WTC11 (cell line): ENCODE measurements at regions of chr16 and their contacts with region 1.

Region 1: GRCh38 chr16:4358831-4359561 is 7.9 kb upstream of the PAM16 start:
- DNase-seq: peak; percentile 94
- ATAC-seq: peak; percentile 90
- H3K4me3 Mint-ChIP-seq: no peak overlapping the region
- H3K27ac Mint-ChIP-seq: no peak overlapping the region
- H3K4me1 Mint-ChIP-seq: no peaks in the 10 kb centered on the region
- H3K27me3 Mint-ChIP-seq: no peaks in the 10 kb centered on the region
- CTCF ChIP-seq: peak; percentile 100

Region 2: DNA sequence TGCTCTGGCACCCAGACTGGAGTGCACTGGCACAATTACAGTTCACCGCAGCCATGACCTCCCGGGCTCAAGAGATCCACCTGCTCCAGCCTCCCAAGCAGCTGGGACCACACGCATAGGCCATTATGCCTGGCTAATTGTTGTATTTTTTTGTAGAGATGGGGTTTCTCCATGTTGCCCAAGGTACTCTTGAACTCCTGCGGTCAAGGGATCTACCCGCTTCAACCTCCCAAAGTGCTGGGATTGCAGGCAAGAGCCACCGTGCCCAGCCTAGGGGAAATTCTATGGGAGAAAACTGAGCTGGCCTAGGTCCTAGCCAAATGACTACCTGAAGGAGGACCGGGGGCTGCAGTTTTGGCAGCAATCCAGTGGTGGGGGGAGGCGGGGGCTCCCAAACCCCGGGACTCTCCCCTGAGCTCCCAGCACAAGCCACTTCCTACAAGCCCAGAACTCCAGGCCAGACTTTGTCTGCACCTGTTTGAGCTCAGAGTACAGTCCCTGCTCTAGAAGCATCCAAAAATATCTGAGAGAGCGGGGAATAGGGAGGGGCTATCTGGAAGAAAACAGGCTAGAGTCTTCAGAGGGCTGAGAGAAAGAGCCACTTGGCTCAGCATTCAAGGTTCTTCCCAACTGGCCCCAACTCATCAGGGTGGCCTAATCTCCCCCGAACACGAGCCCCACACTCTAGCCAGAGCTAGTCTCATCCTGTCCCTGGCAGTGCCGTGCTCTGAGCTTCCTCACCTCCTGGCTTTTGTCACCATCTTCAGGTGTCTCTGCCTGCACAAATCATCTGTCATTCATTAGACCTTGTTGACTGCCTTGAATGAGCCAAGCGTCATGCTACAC is 126.2 kb before region 1 on chr16:
- CTCF ChIA-PET with region 1: no interaction called
- POLR2A ChIA-PET with region 1: no interaction called
- DNase-seq: no peak
- ATAC-seq: no peak; the same call in 1 of the 2 replicates
- H3K4me3 Mint-ChIP-seq: no peak overlapping the region
- H3K27ac Mint-ChIP-seq: no peak overlapping the region
- H3K4me1 Mint-ChIP-seq: no peaks in the 10 kb centered on the region
- H3K27me3 Mint-ChIP-seq: no peaks in the 10 kb centered on the region
- CTCF ChIP-seq: no peak

Region 3: DNA sequence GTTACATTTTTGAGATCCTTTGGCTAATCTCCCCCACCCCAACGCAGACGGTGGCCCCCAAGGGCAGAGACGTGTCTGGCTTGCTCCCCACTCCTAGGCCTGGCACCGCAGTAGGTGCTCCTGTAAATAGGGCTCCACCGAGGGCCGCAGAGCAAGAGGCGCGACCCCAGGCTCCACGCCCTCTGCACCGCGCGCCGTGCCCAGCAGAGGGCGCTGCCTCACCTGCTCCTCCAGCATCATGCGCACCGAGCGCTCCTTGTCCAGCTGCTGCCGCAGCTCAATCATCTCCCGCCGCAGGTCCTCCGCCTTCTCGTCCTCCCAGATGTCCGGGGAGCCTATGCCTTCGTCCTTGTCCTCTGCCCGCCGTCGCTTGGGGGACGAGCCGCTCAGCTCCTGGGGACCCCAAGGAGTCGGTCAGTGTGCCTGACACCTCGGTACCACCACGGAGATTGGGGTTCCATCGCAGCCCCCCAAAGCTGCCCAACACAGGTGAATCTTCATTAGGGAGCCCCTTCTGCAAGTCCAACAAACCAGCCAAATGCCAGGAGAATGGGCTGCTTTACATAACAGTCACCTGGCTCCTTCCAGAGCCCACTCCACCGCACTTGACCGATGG is 97.3 kb before region 1 on chr16:
- CTCF ChIA-PET with region 1: interaction called, 10 read pairs
- POLR2A ChIA-PET with region 1: no interaction called
- DNase-seq: peak; percentile 90
- ATAC-seq: peak; percentile 64
- H3K4me3 Mint-ChIP-seq: no peak overlapping the region
- H3K27ac Mint-ChIP-seq: peak overlapping the region; percentile 93
- H3K4me1 Mint-ChIP-seq: peaks cover 29% of the 10 kb centered on the region
- H3K27me3 Mint-ChIP-seq: no peaks in the 10 kb centered on the region
- CTCF ChIP-seq: peak; percentile 99

Region 4: DNA sequence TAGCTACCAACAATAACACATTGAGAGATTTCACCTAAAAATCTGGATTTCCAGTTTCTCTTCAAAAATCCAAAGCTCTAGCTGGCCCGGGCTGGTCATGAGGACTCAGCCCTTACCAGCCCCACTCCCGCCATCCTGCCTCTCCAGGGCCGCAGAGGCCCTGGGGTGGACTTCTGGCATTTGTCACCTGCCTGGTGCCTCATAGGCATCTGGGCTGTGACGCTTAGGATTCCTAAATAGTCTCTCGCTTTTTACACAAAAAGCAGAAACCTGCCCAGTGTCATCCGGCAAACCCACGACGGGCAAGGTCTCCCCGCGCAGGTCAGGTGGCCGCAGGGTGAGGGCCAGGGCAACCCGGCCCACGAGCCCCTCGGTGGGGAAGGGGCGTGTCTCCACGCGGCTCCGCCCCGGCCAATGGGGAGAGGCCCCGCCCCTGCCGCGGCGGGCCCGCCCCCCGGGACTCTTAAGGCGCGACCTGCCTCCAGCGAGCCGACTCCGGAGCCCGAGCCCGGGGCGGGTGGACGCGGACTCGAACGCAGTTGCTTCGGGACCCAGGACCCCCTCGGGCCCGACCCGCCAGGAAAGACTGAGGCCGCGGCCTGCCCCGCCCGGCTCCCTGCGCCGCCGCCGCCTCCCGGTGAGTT is 12.5 kb after region 1 on chr16 and contains the start of gene VASN:
- CTCF ChIA-PET with region 1: interaction called, 44 read pairs
- POLR2A ChIA-PET with region 1: interaction called, 3 read pairs
- DNase-seq: peak; percentile 83
- ATAC-seq: peak; percentile 77
- H3K4me3 Mint-ChIP-seq: peak within 1 kb of the TSS; percentile 83
- H3K27ac Mint-ChIP-seq: no peak within 1 kb of the TSS
- H3K4me1 Mint-ChIP-seq: peaks cover 25% of the 10 kb centered on the region
- H3K27me3 Mint-ChIP-seq: no peaks in the 10 kb centered on the region
- CTCF ChIP-seq: no peak
- total RNA-seq, gene VASN: 8.0 to 9.1 TPM (median 8.3 TPM) in 3 replicates

Region 5: GRCh38 chr16:4377573-4378143 is 18.7 kb after region 1 on chr16:
- CTCF ChIA-PET with region 1: interaction called, 80 read pairs
- POLR2A ChIA-PET with region 1: interaction called, 5 read pairs
- DNase-seq: no peak
- ATAC-seq: peak; percentile 46
- H3K4me3 Mint-ChIP-seq: no peak overlapping the region
- H3K27ac Mint-ChIP-seq: peak overlapping the region; percentile 64
- H3K4me1 Mint-ChIP-seq: peaks cover 47% of the 10 kb centered on the region
- H3K27me3 Mint-ChIP-seq: no peaks in the 10 kb centered on the region
- CTCF ChIP-seq: no peak

Region 6: DNA sequence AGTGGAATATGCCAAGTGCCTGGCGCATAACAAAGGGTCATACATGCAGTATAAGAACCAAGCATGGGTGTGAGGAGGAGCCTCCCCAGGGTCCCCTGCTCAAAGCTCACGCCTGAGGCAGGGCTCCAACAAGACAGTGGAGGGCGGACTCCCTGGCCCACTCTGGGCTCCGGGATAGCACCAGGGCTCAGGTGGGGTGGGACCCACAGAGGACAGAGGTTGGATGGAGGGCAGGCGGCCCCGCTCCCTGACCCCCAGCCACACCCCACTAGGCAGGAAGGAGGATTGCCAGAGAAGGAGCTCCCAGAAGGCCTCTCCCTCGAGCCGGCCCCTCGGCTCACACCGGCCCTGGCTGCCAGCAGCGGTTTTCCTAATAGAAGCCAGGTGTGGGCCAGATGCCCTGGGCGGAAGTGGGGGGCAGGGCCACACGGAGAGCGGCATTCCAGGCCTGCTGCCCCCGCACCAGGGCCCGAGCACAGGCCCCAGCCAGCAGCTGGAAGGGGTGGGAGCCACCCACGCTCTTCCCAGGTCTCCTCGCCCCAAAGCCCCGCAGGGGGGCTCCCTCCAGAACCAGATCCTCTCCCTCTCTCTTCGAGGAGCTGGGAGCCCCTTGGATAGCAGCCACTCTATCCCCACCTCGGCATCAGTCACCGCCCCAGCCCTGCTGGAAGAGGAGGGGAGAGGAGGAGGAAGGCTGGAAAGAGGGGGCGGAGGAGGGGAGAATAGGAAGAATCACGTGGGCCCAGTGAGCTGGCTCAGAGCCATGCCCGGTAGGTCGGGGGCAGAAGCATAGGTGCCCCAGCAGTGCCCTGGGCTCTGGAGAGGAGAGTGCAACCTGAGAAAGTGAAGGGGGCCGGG is 33.6 kb after region 1 on chr16:
- CTCF ChIA-PET with region 1: interaction called, 106 read pairs
- POLR2A ChIA-PET with region 1: interaction called, 3 read pairs
- DNase-seq: peak; percentile 81
- ATAC-seq: peak; percentile 76
- H3K4me3 Mint-ChIP-seq: peak overlapping the region; percentile 20; the same call in 1 of the 2 replicates
- H3K27ac Mint-ChIP-seq: peak overlapping the region; percentile 92
- H3K4me1 Mint-ChIP-seq: peaks cover 48% of the 10 kb centered on the region
- H3K27me3 Mint-ChIP-seq: no peaks in the 10 kb centered on the region
- CTCF ChIP-seq: no peak

Region 7: DNA sequence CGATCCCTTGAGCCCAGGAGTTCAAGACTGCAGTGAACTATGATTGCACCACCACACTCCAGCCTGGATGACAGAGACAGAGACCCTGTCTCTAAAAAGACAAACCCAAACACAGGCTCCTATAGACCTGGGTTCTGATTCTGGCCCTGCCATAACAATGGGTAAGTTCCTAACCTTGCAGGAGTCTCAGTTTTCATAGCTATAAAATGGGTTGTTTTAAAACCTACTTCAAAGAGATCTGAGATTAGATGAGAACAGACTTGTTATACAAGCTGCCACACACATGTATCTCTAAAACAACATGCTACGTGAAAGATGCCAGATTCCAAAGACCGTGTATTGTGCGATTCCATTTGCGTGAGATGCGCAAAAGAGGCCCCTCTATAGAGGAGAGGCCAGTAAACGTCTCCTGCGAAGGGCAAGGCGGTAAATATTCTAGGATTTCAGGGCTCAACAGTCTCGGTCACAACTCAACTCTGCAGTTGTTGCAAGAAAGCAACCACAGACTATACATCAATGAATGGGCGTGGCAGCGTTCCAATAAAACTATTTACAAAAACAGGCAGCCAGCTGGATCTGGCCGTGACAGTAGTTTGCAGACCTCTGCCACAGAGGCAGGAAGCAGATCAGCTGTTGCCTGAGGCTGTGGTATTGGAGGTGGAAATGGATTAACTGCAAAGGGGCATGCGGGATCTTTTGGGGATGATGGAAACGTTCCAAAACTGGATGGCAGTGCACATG is 51.5 kb after region 1 on chr16:
- CTCF ChIA-PET with region 1: interaction called, 322 read pairs
- POLR2A ChIA-PET with region 1: no interaction called
- DNase-seq: no peak
- ATAC-seq: no peak
- H3K4me3 Mint-ChIP-seq: no peak overlapping the region
- H3K27ac Mint-ChIP-seq: no peak overlapping the region
- H3K4me1 Mint-ChIP-seq: peaks cover 4% of the 10 kb centered on the region
- H3K27me3 Mint-ChIP-seq: no peaks in the 10 kb centered on the region
- CTCF ChIP-seq: no peak

Region 8: DNA sequence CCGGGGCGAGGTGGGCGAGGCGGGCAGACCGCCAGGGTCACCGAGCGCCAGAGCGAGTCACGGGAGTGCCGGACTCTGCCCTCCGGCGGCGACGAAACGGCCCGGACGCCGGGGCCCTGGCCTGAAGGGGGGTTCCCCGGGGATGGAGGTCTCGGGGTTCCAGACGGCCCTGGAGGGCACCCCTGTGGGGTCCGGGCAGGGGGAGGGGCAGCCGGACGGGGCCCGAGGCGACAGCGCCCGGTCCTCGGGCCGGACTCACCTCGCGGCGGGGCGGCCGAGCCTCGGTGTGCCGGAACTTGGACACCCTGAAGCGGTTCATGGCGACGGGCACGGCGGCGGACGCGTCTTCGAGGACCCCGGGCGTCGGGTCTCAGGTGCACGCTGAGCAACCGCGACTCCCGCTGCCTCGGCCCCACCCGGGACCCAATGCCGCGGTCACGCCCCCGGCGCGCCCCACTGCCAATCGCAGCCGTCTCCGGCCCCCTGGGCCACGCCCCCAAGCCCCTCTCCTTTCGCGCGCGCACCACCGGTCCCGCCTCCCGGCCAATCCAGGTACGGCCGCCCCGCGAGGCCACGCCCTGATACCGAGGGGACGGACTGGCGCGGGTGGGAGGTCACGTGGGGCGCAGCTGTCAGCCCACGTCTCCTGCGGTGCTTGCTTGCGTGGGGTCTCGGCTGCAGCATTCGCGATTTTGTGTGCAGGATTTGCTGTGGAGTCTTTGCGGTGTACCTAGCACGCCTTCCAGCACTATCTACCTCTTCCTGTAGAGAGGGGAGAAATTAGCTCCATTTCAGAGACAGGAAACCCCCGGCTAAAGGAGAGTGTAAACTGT is 57.4 kb after region 1 on chr16 and contains the start of gene CORO7:
- CTCF ChIA-PET with region 1: interaction called, 18 read pairs
- POLR2A ChIA-PET with region 1: no interaction called
- DNase-seq: peak; percentile 92
- ATAC-seq: peak; percentile 94
- H3K4me3 Mint-ChIP-seq: peak within 1 kb of the TSS; percentile 74
- H3K27ac Mint-ChIP-seq: peak within 1 kb of the TSS; percentile 28; the same call in 1 of the 2 replicates
- H3K4me1 Mint-ChIP-seq: peaks cover 5% of the 10 kb centered on the region
- H3K27me3 Mint-ChIP-seq: peaks cover 15% of the 10 kb centered on the region
- CTCF ChIP-seq: no peak
- total RNA-seq, gene CORO7: 36.7 to 45.5 TPM (median 38.6 TPM) in 3 replicates